SK-N-SH (cell line): ENCODE measurements at regions of chr2 and their contacts with region 1.

Region 1: DNA sequence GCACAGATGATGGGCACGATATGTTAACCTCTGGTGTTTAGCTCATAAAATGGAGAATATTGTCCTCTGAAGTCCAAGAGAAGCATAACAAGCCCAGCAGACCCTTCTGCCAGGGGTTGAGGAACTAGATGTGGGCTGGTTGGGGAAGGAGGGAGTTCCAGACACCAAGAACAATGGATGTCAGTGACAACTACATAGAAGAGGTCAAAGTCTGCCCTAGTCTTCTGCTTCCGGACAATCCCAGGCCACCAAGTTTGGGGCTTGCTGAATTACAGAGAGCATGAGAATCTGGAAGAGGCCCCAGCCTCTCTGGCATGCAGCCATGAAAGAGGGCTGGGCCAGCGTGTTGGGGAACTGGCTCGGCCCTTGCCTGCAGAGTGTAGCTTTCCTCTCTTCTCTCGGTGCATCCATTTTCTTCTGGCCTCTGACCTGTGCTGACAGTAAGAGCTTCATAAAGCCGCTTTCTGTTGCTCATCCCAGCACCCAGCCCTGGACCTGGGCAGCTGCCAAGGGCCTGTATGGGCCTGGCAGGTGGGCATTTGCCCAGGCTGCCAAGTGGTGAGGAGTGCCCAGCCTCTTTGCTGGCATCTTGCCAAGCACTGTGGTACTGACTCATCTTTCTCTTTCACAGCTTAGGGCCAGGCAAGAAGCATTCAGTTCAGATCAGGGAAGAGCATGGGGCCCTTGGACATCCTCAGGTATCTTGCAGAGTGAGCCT is 14.6 kb upstream of the LAPTM4A start:
- DNase-seq: peak; percentile 67
- H3K4me3 ChIP-seq: no peak overlapping the region
- H3K27ac ChIP-seq: peak overlapping the region; percentile 47 to 81; a peak in 3 of 4 replicates
- H3K4me1 ChIP-seq: peaks cover 18 to 21% of the 10 kb centered on the region in 2 experiments
- H3K27me3 ChIP-seq: no peaks in the 10 kb centered on the region
- CTCF ChIP-seq: no peak
- EP300 ChIP-seq: peak; percentile 32 to 87; a peak in 2 of 4 replicates
- RAD21 ChIP-seq: peak; percentile 19; the same call in 1 of the 2 replicates

Region 2: DNA sequence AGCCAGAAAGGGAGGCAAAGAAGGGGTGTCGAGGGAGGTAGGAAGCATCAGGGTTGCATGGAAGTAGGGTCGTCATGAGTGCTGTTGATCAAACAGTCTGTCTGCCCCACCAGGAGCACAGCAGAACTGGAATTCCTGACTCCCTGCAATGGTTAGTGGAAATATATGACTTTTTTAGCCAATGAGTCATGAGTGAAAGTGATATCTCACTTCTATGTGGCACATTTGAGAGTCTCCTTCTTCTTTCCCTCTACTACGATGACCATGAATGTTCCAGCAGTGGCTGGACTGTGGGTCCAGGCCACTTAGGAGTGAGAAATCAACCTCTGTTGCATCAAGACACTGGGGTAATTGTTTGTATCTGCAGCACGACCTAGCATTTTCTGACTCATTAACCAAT is 363.8 kb before region 1 on chr2:
- CTCF ChIA-PET with region 1: no interaction called
- POLR2A ChIA-PET with region 1: no interaction called
- DNase-seq: no peak
- H3K4me3 ChIP-seq: no peak overlapping the region
- H3K27ac ChIP-seq: no peak overlapping the region
- H3K4me1 ChIP-seq: no peaks in the 10 kb centered on the region
- H3K27me3 ChIP-seq: no peaks in the 10 kb centered on the region; the same call in 1 of the 2 replicates
- CTCF ChIP-seq: no peak
- EP300 ChIP-seq: no peak
- RAD21 ChIP-seq: no peak

Region 3: GRCh38 chr2:20051532-20052228 is 14.4 kb before region 1 on chr2 and contains the start of gene LAPTM4A:
- CTCF ChIA-PET with region 1: interaction called, 10 read pairs
- POLR2A ChIA-PET with region 1: interaction called, 30 read pairs
- DNase-seq: peak; percentile 98
- H3K4me3 ChIP-seq: peak within 1 kb of the TSS; percentile 72 to 99
- H3K27ac ChIP-seq: peak within 1 kb of the TSS; percentile 98 to 100
- H3K4me1 ChIP-seq: peaks cover 11 to 30% of the 10 kb centered on the region in 2 experiments; a peak in 3 of 4 replicates
- H3K27me3 ChIP-seq: no peaks in the 10 kb centered on the region
- CTCF ChIP-seq: no peak
- EP300 ChIP-seq: no peak; a peak in 1 of 4 replicates
- RAD21 ChIP-seq: peak; percentile 17; the same call in 1 of the 2 replicates
- polyA plus RNA-seq, gene LAPTM4A: 306 and 350 TPM in 2 replicates